ENCODE measurements at regions of chr2 and their contacts with region 1.

Region 1: DNA sequence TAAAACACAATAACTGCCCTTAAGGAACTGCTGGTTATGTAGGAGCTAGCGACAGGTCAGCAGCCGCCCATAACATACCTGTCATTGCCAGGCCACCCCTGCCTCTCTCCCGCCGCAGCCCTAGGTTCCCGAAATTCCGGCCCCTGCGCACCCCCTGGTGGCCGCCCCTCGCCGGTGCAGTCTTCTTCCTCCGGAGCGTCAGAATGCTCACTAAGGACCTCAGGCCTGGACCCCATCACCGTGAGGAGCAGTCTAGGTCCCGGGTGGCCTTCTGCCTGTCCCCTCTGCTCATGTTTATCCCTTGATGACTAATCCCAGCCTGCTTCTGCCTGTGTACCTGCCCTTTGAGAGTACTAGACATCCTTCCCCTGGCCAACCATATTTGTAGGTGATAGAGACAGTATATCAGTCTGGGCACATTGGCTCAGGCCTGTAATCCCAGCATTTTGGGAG is 115.7 kb upstream of the SLC1A4 start:
- DNase-seq: no peak
- ATAC-seq: peak; percentile 96
- H3K4me3 ChIP-seq: peak overlapping the region in 1 of 2 experiments; percentile 30; a peak in 2 of 4 replicates
- H3K27ac ChIP-seq: no peak overlapping the region
- H3K4me1 ChIP-seq: no peaks in the 10 kb centered on the region; the same call in 1 of the 2 replicates
- H3K27me3 ChIP-seq: no peaks in the 10 kb centered on the region
- CTCF ChIP-seq: peak; percentile 98

Region 2: GRCh38 chr2:64523666-64524603 is 349.6 kb before region 1 on chr2 and contains the start of gene AFTPH:
- CTCF ChIA-PET with region 1: no interaction called
- POLR2A ChIA-PET with region 1: no interaction called
- in situ Hi-C with region 1: no loop called
- intact Hi-C with region 1: loop called (anchors 2 kb)
- DNase-seq: peak; percentile 95
- ATAC-seq: peak; percentile 100
- H3K4me3 ChIP-seq: peak within 1 kb of the TSS; percentile 94
- H3K27ac ChIP-seq: peak within 1 kb of the TSS; percentile 95
- H3K4me1 ChIP-seq: peaks cover 16% of the 10 kb centered on the region
- H3K27me3 ChIP-seq: peaks cover 10% of the 10 kb centered on the region
- CTCF ChIP-seq: no peak
- total RNA-seq, gene AFTPH: 17.9 TPM

Region 3: DNA sequence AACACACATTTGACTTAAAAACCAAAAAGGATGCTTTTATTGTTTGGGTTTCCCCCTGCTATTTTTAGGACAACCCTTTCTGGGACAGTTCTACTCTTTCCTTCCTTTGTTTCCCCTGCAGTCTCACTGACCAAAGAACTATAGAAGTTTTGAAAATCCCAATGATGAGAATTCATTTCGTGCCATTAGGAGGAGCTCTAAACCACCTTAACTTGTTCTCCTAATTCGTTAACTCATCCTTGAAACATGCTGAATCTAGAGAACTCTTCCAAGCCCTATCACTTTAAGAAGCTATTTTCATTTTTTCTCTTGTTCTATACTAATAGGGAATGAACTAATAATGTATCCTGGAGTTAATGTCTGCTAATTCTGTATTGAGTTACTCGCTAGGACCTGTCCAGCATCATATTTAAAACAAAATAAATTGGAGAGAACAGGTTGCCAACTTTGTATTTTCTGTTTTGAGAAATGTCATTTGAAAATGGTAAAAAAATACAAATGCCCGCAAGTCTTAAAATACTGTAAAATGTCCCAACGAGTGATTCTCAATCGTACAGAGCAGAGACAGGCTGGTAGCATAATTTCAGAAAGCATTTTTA is 286.5 kb before region 1 on chr2:
- CTCF ChIA-PET with region 1: no interaction called
- POLR2A ChIA-PET with region 1: no interaction called
- in situ Hi-C with region 1: no loop called
- intact Hi-C with region 1: loop called (anchors 5 kb)
- DNase-seq: peak; percentile 36
- ATAC-seq: no peak
- H3K4me3 ChIP-seq: no peak overlapping the region
- H3K27ac ChIP-seq: no peak overlapping the region
- H3K4me1 ChIP-seq: no peaks in the 10 kb centered on the region
- H3K27me3 ChIP-seq: no peaks in the 10 kb centered on the region
- CTCF ChIP-seq: peak; percentile 68; the same call in 1 of the 2 replicates

Region 4: GRCh38 chr2:65129826-65130663 is 256.5 kb after region 1 on chr2 and contains the start of gene RAB1A:
- CTCF ChIA-PET with region 1: interaction called, 10 read pairs
- POLR2A ChIA-PET with region 1: no interaction called
- in situ Hi-C with region 1: no loop called
- intact Hi-C with region 1: no loop called
- DNase-seq: peak; percentile 97
- ATAC-seq: peak; percentile 97
- H3K4me3 ChIP-seq: peak within 1 kb of the TSS; percentile 83 to 91
- H3K27ac ChIP-seq: peak within 1 kb of the TSS; percentile 86
- H3K4me1 ChIP-seq: peaks cover 18% of the 10 kb centered on the region
- H3K27me3 ChIP-seq: no peaks in the 10 kb centered on the region
- CTCF ChIP-seq: no peak
- total RNA-seq, gene RAB1A: 128 TPM